HAP-1 (cell line): ENCODE measurements at regions of chr10 and their contacts with region 1.

Region 1: GRCh38 chr10:97037365-97038361 is 148.1 kb downstream of the SLIT1 start:
- DNase-seq: peak; percentile 71 to 91
- H3K4me3 ChIP-seq: no peak overlapping the region
- H3K4me1 ChIP-seq: peaks cover 2% of the 10 kb centered on the region; the same call in 1 of the 2 replicates
- H3K27me3 ChIP-seq: peaks cover 5% of the 10 kb centered on the region

Region 2: DNA sequence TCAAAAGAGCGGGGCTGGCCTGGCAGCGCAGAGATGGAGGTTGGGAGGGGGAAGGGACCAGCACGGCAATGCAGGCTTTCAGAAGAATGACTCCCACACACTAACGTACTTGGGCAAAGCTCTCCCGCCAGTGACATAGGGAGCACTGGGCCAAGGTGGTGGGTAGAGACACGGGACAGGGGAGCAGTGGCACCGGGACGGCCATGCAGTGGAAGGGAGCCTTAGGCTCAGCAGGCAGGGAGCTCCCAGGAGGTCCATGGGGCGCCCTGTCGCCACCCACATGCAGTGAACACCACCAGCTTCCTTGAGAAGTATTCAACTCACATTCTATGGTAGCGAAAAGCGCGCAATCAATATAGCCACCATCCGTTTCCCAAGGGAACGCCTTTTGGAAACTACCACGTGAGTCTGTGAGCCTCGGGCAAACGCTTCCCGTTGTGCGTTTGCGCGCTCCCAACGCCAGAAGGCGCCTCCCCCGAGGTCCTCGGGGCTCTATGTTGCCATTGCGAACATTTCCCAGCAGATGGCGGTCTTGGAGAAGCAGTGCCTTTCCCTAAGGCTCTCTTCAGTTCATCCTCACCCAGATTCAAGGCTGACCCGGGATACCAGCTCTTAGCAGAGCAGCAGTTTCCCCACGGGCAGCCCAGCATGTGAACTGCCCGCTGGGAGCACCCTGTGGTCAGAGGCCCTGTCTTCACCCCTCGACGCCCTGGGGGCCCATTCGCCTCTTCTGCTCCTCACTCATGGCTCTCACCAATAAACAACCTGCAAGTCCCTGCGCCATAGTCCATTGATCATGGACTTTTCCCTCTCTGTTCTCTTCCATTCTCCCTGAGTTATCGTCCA is 662.5 kb before region 1 on chr10:
- in situ Hi-C with region 1: loop called (anchors 10 kb)
- DNase-seq: peak; percentile 90 to 93
- H3K4me3 ChIP-seq: peak overlapping the region; percentile 15
- H3K4me1 ChIP-seq: peaks cover 6% of the 10 kb centered on the region
- H3K27me3 ChIP-seq: no peaks in the 10 kb centered on the region

Region 3: DNA sequence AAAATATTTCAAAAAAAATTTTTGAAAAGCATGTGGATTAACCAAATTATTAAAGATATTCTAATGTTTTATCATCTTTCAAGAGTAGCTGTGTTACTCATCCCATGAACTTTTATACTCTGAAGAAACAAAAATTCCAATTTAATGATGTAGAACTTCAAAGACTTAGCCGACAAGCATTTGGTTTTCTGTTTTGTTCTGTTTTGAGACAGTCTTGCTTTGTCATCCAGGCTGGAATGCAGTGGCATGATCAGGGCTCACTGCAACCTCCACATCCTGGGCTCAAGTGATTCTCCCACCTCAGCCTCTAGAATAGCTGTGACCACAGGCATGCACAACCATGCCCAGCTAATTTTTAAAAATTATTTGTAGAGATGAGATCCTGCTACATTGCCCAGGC is 223.4 kb before region 1 on chr10:
- in situ Hi-C with region 1: no loop called
- DNase-seq: no peak
- H3K4me3 ChIP-seq: no peak overlapping the region
- H3K4me1 ChIP-seq: no peaks in the 10 kb centered on the region
- H3K27me3 ChIP-seq: peaks cover 10% of the 10 kb centered on the region

Region 4: GRCh38 chr10:96978621-96979154 is 59.0 kb before region 1 on chr10:
- in situ Hi-C with region 1: no loop called
- DNase-seq: no peak
- H3K4me3 ChIP-seq: no peak overlapping the region
- H3K4me1 ChIP-seq: no peaks in the 10 kb centered on the region
- H3K27me3 ChIP-seq: no peaks in the 10 kb centered on the region

Region 5: GRCh38 chr10:97157578-97158095 is 120.0 kb after region 1 on chr10:
- in situ Hi-C with region 1: no loop called
- DNase-seq: no peak
- H3K4me3 ChIP-seq: no peak overlapping the region
- H3K4me1 ChIP-seq: no peaks in the 10 kb centered on the region
- H3K27me3 ChIP-seq: no peaks in the 10 kb centered on the region